Calu3 (cell line): ENCODE measurements at regions of chr4 and their contacts with region 1.

Region 1: GRCh38 chr4:48602222-48602621 is 112.2 kb downstream of the ZAR1 start:
- DNase-seq: peak; percentile 1
- H3K4me3 Mint-ChIP-seq: no peak overlapping the region
- H3K27ac Mint-ChIP-seq: peak overlapping the region; percentile 69
- H3K4me1 Mint-ChIP-seq: peaks cover 19% of the 10 kb centered on the region
- H3K27me3 Mint-ChIP-seq: no peaks in the 10 kb centered on the region
- CTCF ChIP-seq: no peak

Region 2: GRCh38 chr4:48668254-48669017 is 66.2 kb after region 1 on chr4:
- CTCF ChIA-PET with region 1: no interaction called
- intact Hi-C with region 1: loop called (anchors 5 kb)
- DNase-seq: peak; percentile 6
- H3K4me3 Mint-ChIP-seq: no peak overlapping the region
- H3K27ac Mint-ChIP-seq: peak overlapping the region; percentile 65
- H3K4me1 Mint-ChIP-seq: peaks cover 34% of the 10 kb centered on the region
- H3K27me3 Mint-ChIP-seq: no peaks in the 10 kb centered on the region
- CTCF ChIP-seq: no peak